Natural killer cell (primary cell): ENCODE measurements at regions of chr22 and their contacts with region 1.

Region 1: DNA sequence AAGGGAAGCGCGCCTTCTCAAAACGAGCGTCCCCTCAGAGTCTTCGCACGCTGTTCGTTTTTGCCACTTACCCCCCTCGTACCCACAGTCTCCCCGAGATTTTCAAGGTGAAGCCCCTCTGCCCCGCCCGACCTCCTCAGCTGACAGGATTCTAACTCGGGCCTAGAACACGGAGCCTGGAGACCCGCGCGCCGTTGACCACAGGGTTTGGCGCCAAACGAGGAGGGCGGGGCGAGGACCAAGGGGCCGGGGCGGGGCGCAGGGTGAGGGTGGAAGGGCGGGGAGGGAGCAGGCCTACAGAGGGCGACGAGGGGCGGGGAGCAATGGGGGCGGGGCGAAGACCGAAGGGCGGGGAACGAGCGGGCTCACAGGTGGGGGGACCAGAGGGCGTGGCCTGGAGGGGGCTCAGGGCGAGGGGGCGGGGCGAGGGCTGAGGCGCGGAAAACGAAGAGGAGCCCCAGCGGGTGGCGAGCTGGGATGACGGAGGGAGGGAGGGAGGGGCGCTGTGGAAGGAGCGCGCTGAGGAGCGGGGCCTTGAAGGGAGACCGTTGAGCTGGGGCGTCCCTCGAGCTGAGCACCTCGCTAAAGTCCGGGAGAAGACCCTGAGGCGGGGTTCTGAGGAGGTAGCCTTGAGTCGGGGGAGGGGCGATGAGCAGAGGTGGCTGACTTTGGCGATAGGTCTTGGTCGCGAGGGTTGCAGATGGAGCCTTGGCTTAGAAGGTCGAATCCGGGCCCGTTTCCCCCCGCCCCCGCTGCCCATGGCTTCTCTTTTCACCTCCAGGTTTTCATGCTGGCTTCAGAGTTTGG is at the start of gene DMC1:
- DNase-seq: peak; percentile 80 to 98
- ATAC-seq: peak; percentile 96 to 99 (median 97)
- H3K4me3 ChIP-seq: peak within 1 kb of the TSS; percentile 68
- H3K4me3 Mint-ChIP-seq: peak within 1 kb of the TSS; percentile 90
- H3K27ac ChIP-seq: peak within 1 kb of the TSS; percentile 36
- H3K27ac Mint-ChIP-seq: peak within 1 kb of the TSS; percentile 52 to 86
- H3K4me1 ChIP-seq: peaks cover 17% of the 10 kb centered on the region
- H3K4me1 Mint-ChIP-seq: peaks cover 12 to 19% of the 10 kb centered on the region in 2 donors
- H3K27me3 ChIP-seq: no peaks in the 10 kb centered on the region
- H3K27me3 Mint-ChIP-seq: no peaks in the 10 kb centered on the region
- CTCF ChIP-seq: no peak
- total RNA-seq, gene DMC1: 0.31 to 1.7 (median 0.63) TPM

Region 2: GRCh38 chr22:38412435-38413084 is 157.6 kb before region 1 on chr22:
- intact Hi-C with region 1: loop called (anchors 5 kb)
- DNase-seq: peak; percentile 53 to 58
- ATAC-seq: peak; percentile 62 to 81 (median 72)
- H3K4me3 ChIP-seq: no peak overlapping the region
- H3K4me3 Mint-ChIP-seq: no peak overlapping the region
- H3K27ac ChIP-seq: no peak overlapping the region
- H3K27ac Mint-ChIP-seq: no peak overlapping the region
- H3K4me1 ChIP-seq: peaks cover 11% of the 10 kb centered on the region
- H3K4me1 Mint-ChIP-seq: no peaks in the 10 kb centered on the region
- H3K27me3 ChIP-seq: no peaks in the 10 kb centered on the region
- H3K27me3 Mint-ChIP-seq: no peaks in the 10 kb centered on the region
- CTCF ChIP-seq: peak; percentile 70